Right ventricle myocardium superior (tissue), 1 donor: ENCODE measurements at regions of chr18 and their contacts with region 1.

Region 1: DNA sequence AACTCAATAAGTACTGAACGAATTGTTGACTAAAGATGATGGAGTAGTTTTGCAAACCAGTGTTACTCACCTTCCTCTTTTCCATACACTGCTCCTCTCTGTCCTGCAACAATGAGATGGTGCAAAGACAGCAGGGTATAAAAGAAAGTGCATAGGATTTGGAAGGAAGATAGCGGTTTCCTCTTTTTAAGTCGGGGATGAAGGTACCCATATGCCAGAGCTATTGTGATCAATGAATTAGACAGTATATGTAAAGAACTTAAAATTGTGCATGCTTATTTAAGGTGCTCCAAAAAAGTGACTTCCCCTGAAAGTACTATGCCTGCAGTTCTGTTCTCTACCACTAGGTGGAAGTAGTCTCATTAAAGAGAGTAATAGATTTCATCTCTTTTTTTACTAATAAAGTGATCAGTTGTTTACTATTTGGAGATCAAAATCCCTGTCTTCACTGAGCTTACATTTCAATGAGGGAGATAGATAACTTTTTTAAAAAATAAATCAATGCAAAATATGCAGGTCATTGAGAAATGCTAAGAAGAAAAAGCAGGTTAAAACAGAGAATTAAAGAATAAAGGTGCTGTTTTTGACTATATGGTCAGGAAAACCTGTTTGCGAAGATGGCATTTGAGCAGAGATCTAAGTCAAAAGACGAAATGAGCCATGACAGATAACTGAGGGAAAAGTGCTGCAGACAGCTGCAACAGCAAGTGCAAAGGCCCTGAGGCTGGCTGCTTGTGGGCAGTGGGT is 339.7 kb upstream of the SLC14A2 start:
- DNase-seq: no peak
- ATAC-seq: no peak

Region 2: DNA sequence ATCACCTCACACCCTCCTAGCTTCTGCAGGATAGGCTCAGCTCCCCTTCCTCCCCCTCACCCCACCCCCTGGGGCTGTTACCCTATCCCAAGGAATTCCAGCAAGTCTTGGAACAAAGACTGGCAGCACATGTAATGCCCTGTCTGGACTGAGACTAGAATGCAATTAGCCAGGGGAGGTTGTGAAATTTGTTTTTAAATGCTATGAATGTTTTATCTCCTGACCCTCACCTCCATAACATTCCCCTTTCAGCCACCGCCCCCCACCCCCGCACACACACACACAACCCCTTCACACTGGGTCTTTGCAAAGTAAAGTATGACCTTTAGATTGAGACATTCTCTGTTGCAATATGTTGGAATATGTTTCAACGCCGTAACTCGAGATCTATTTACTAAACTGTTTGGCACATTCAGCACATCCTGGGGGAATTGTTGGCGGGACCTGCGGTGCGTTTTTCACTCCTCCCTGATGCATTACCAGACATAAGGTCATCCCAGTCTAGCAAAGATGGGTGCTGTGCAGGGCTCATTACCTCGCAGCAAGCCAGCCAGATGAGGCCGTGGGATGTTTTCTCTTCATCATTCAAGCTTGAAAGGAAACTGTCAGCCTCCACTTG is 49.1 kb after region 1 on chr18:
- intact Hi-C with region 1: no loop called
- DNase-seq: peak; percentile 62
- ATAC-seq: peak; percentile 57

Region 3: DNA sequence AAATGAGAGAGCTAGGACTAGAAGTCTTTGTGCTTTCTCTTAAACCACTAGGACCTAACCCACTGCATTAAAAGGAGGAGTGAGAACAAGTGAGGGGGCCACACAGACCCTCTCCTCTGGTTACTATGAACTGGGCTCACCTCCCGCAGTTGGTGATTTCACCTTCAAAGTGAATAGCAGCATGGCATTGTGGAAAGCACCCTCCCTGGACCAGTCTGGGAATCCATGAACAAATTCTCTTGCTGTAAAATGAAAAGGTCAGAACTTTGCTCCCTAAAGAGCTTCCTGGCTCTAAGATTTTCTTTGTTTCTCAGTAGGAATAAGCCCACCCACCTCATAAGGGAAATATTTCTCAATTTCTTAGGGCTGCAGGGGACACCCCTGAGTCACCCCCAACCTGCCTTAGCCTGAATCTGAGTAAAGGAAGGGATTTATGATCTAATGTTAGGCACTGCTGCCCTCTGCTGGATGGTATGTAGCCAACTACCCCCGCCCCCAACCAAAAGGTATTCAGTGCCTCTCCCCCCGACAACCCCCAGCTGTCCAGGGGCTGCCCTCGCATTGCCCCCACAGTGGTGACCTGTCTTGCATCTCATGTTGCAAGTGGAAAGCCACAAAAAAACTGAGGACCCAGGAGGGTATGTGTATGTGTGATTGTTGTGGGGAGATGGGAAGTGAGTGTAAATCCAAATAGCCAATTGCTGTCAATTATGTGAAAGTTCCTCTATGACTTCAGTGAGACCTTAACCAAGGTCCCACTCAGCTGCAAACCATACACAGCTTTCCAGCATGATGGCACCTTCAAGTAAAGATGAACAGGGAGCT is 108.8 kb after region 1 on chr18:
- intact Hi-C with region 1: loop called (anchors 10 kb)
- DNase-seq: no peak
- ATAC-seq: peak; percentile 83